ENCODE measurements at regions of chr19 and their contacts with region 1.

Region 1: GRCh38 chr19:18388100-18388959 is 2.4 kb downstream of the GDF15 start:
- DNase-seq: no peak
- ATAC-seq: peak; percentile 80
- H3K4me3 ChIP-seq: peak overlapping the region; percentile 72 to 96
- H3K27ac ChIP-seq: peak overlapping the region; percentile 82
- H3K4me1 ChIP-seq: peaks cover 11% of the 10 kb centered on the region
- H3K27me3 ChIP-seq: no peaks in the 10 kb centered on the region
- CTCF ChIP-seq: peak; percentile 97

Region 2: DNA sequence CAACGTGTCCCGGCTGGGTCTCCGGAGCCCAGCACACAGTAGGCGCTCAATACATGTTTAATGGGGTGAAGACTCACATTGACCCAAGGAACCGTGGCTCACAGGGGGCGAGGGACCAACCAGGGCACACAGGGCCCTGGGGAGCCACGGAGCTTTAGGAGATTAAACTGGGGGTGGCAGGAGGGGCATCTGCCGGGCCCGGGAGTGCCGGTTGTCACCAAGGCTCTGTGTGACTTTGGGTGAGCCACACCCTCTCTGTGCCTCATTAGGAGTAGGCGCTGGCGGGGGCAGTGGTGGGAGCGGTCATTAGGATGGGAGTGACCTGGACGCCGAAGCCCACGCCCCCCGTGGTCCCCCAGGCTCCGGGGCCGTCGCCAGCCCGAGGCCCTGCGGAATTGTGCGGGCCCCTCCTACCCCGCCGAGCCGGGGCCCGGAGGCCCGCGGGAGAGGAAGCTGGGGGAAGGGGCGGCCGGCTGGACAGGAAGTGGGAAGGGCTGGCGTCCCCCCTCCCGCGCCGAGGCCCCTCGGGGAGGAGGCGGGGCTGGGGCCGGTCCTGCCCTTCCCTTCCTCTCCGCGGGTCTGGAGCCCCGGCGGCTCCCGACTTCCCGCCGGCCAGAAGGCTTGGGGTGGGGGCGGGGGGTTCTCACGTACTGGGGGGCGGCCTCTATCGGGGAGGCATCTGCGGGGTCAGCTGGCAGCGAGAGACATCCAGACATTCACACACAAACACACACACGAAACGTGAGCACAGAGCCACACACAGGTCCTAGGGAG is 29.1 kb after region 1 on chr19:
- CTCF ChIA-PET with region 1: interaction called, 3 read pairs
- POLR2A ChIA-PET with region 1: interaction called, 10 read pairs
- in situ Hi-C with region 1: no loop called
- intact Hi-C with region 1: no loop called
- DNase-seq: no peak
- ATAC-seq: peak; percentile 55
- H3K4me3 ChIP-seq: peak overlapping the region; percentile 37 to 60
- H3K27ac ChIP-seq: peak overlapping the region; percentile 95
- H3K4me1 ChIP-seq: peaks cover 40% of the 10 kb centered on the region
- H3K27me3 ChIP-seq: no peaks in the 10 kb centered on the region
- CTCF ChIP-seq: no peak

Region 3: DNA sequence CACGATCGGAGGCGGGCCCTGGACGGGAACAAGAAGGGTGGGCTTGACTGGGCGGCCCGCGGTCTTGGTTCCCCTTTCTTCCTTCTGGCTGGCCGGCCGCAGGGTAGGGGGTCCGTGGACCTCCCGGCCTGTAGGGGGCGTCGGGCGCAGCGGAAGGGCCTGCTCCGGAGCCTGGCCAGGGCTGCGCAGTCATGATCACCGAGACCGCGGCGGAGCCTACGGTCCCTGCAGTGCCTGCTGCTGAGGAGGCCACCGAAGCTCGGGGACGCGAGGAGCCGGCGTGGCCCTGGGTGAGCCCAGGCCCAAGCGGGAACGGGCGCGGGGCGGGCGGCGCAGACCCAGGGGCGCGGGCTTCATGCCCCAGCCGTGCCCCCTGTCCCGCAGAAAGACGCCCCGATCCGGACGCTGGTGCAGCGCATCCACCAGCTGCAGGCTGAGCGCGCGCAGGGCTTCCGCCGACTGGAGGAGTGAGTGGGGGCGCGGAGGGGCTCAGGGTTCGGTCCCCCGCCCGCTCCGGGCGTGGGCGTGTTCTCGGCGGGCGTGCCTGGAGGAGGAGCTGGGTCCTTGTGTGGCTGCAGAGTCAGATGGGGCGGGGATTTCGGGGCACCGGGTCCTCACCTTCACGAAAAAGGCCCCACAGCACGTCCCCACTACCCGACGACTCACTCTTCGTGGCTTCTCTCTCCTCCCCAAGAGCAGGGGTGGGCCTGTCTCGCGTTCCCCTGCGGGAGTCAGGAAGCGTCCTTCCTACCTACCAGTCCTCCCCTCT is 200.5 kb after region 1 on chr19 and contains the start of gene REX1BD:
- CTCF ChIA-PET with region 1: no interaction called
- POLR2A ChIA-PET with region 1: no interaction called
- in situ Hi-C with region 1: no loop called
- intact Hi-C with region 1: no loop called
- DNase-seq: no peak
- ATAC-seq: peak; percentile 84
- H3K4me3 ChIP-seq: peak within 1 kb of the TSS; percentile 65 to 70
- H3K27ac ChIP-seq: peak within 1 kb of the TSS; percentile 76
- H3K4me1 ChIP-seq: no peaks in the 10 kb centered on the region
- H3K27me3 ChIP-seq: no peaks in the 10 kb centered on the region
- CTCF ChIP-seq: peak; percentile 92
- total RNA-seq, gene REX1BD: 32.0 TPM

Region 4: GRCh38 chr19:18832306-18833140 is 444.2 kb after region 1 on chr19:
- CTCF ChIA-PET with region 1: interaction called, 10 read pairs
- POLR2A ChIA-PET with region 1: no interaction called
- in situ Hi-C with region 1: no loop called
- intact Hi-C with region 1: no loop called
- DNase-seq: no peak
- ATAC-seq: peak; percentile 62
- H3K4me3 ChIP-seq: peak overlapping the region; percentile 76 to 83
- H3K27ac ChIP-seq: peak overlapping the region; percentile 41
- H3K4me1 ChIP-seq: peaks cover 6% of the 10 kb centered on the region; the same call in 1 of the 2 replicates
- H3K27me3 ChIP-seq: no peaks in the 10 kb centered on the region
- CTCF ChIP-seq: no peak; the same call in 1 of the 2 replicates